CD4-positive, alpha-beta memory T cell (primary cell): ENCODE measurements at regions of chr12 and their contacts with region 1.

Region 1: GRCh38 chr12:47032644-47033043 is 46.8 kb upstream of the PCED1B start:
- DNase-seq: peak; percentile 33 to 65 (median 56)
- H3K4me3 ChIP-seq: no peak overlapping the region
- H3K4me3 Mint-ChIP-seq: no peak overlapping the region
- H3K27ac ChIP-seq: no peak overlapping the region
- H3K27ac Mint-ChIP-seq: peak overlapping the region in 1 of 7 donors; percentile 1
- H3K4me1 ChIP-seq: peaks cover 10% of the 10 kb centered on the region
- H3K4me1 Mint-ChIP-seq: peaks cover 8 to 16% (median 10%) of the 10 kb centered on the region in 4 donors
- H3K27me3 ChIP-seq: no peaks in the 10 kb centered on the region
- H3K27me3 Mint-ChIP-seq: no peaks in the 10 kb centered on the region

Region 2: GRCh38 chr12:47054659-47055058 is 22.0 kb after region 1 on chr12:
- CTCF ChIA-PET with region 1: interaction called, 10 read pairs
- POLR2A ChIA-PET with region 1: no interaction called
- intact Hi-C with region 1: no loop called
- DNase-seq: no peak
- H3K4me3 ChIP-seq: no peak overlapping the region
- H3K4me3 Mint-ChIP-seq: no peak overlapping the region
- H3K27ac ChIP-seq: no peak overlapping the region
- H3K27ac Mint-ChIP-seq: no peak overlapping the region
- H3K4me1 ChIP-seq: no peaks in the 10 kb centered on the region
- H3K4me1 Mint-ChIP-seq: no peaks in the 10 kb centered on the region
- H3K27me3 ChIP-seq: no peaks in the 10 kb centered on the region
- H3K27me3 Mint-ChIP-seq: no peaks in the 10 kb centered on the region

Region 3: GRCh38 chr12:47190271-47190750 is 157.7 kb after region 1 on chr12:
- CTCF ChIA-PET with region 1: interaction called, 27 read pairs
- POLR2A ChIA-PET with region 1: interaction called, 7 read pairs
- intact Hi-C with region 1: loop called (anchors 2 kb)
- DNase-seq: no peak
- H3K4me3 ChIP-seq: no peak overlapping the region
- H3K4me3 Mint-ChIP-seq: peak overlapping the region in 7 of 8 donors; percentile 8 to 93 (median 69)
- H3K27ac ChIP-seq: peak overlapping the region; percentile 42
- H3K27ac Mint-ChIP-seq: peak overlapping the region; percentile 62 to 95 (median 93)
- H3K4me1 ChIP-seq: peaks cover 80% of the 10 kb centered on the region
- H3K4me1 Mint-ChIP-seq: peaks cover 67 to 90% (median 78%) of the 10 kb centered on the region in 4 donors
- H3K27me3 ChIP-seq: no peaks in the 10 kb centered on the region
- H3K27me3 Mint-ChIP-seq: no peaks in the 10 kb centered on the region

Region 4: GRCh38 chr12:47391566-47391965 is 358.9 kb after region 1 on chr12:
- CTCF ChIA-PET with region 1: interaction called, 199 read pairs
- POLR2A ChIA-PET with region 1: interaction called, 3 read pairs
- intact Hi-C with region 1: no loop called
- DNase-seq: peak; percentile 66 to 86 (median 72)
- H3K4me3 ChIP-seq: no peak overlapping the region
- H3K4me3 Mint-ChIP-seq: peak overlapping the region; percentile 29 to 83 (median 63)
- H3K27ac ChIP-seq: peak overlapping the region; percentile 54
- H3K27ac Mint-ChIP-seq: peak overlapping the region; percentile 95 to 99 (median 98)
- H3K4me1 ChIP-seq: peaks cover 60% of the 10 kb centered on the region
- H3K4me1 Mint-ChIP-seq: peaks cover 45 to 74% (median 60%) of the 10 kb centered on the region in 4 donors
- H3K27me3 ChIP-seq: no peaks in the 10 kb centered on the region
- H3K27me3 Mint-ChIP-seq: no peaks in the 10 kb centered on the region

Region 5: GRCh38 chr12:47636908-47637780 is 604.5 kb after region 1 on chr12:
- CTCF ChIA-PET with region 1: interaction called, 31 read pairs
- POLR2A ChIA-PET with region 1: no interaction called
- intact Hi-C with region 1: loop called (anchors 1 kb)
- DNase-seq: peak; percentile 6 to 44 (median 16)
- H3K4me3 ChIP-seq: no peak overlapping the region
- H3K4me3 Mint-ChIP-seq: no peak overlapping the region
- H3K27ac ChIP-seq: no peak overlapping the region
- H3K27ac Mint-ChIP-seq: peak overlapping the region in 1 of 7 donors; percentile 21
- H3K4me1 ChIP-seq: no peaks in the 10 kb centered on the region
- H3K4me1 Mint-ChIP-seq: peaks cover 0 to 7% (median 1%) of the 10 kb centered on the region in 4 donors
- H3K27me3 ChIP-seq: no peaks in the 10 kb centered on the region
- H3K27me3 Mint-ChIP-seq: no peaks in the 10 kb centered on the region